CD4-positive, alpha-beta T cell (primary cell): ENCODE measurements at regions of chr7 and their contacts with region 1.

Region 1: GRCh38 chr7:92245487-92246362 is at the starts of genes ANKIB1 and KRIT1:
- DNase-seq: peak; percentile 76 to 93 (median 81)
- ATAC-seq: peak; percentile 78
- H3K4me3 ChIP-seq: peak within 1 kb of the TSS; percentile 87
- H3K4me3 Mint-ChIP-seq: peak within 1 kb of the TSS; percentile 97
- H3K27ac ChIP-seq: peak within 1 kb of the TSS; percentile 86 to 96
- H3K27ac Mint-ChIP-seq: peak within 1 kb of the TSS; percentile 99
- H3K4me1 ChIP-seq: peaks cover 17% of the 10 kb centered on the region
- H3K4me1 Mint-ChIP-seq: peaks cover 61% of the 10 kb centered on the region
- H3K27me3 ChIP-seq: no peaks in the 10 kb centered on the region
- H3K27me3 Mint-ChIP-seq: no peaks in the 10 kb centered on the region
- CTCF ChIP-seq: no peak
- total RNA-seq, gene ANKIB1: 60.0 to 66.9 TPM
- total RNA-seq, gene KRIT1: 28.6 to 28.7 TPM

Region 2: GRCh38 chr7:92178927-92179924 is 66.5 kb before region 1 on chr7 and contains the start of gene LRRD1:
- CTCF ChIA-PET with region 1: no interaction called
- POLR2A ChIA-PET with region 1: interaction called, 5 read pairs
- intact Hi-C with region 1: loop called in 1 of 2 experiments (anchors 5 kb)
- DNase-seq: peak; percentile 78 to 93 (median 88)
- ATAC-seq: peak; percentile 99
- H3K4me3 ChIP-seq: peak within 1 kb of the TSS; percentile 58
- H3K4me3 Mint-ChIP-seq: peak within 1 kb of the TSS; percentile 84
- H3K27ac ChIP-seq: no peak within 1 kb of the TSS
- H3K27ac Mint-ChIP-seq: no peak within 1 kb of the TSS
- H3K4me1 ChIP-seq: peaks cover 11% of the 10 kb centered on the region
- H3K4me1 Mint-ChIP-seq: peaks cover 14% of the 10 kb centered on the region
- H3K27me3 ChIP-seq: peaks cover 0 to 2% of the 10 kb centered on the region in 2 experiments
- H3K27me3 Mint-ChIP-seq: peaks cover 7% of the 10 kb centered on the region
- CTCF ChIP-seq: peak; percentile 98
- total RNA-seq, gene LRRD1: not detected

Region 3: GRCh38 chr7:92281031-92281430 is 35.3 kb after region 1 on chr7:
- CTCF ChIA-PET with region 1: no interaction called
- POLR2A ChIA-PET with region 1: no interaction called
- intact Hi-C with region 1: no loop called
- DNase-seq: no peak
- ATAC-seq: no peak
- H3K4me3 ChIP-seq: no peak overlapping the region
- H3K4me3 Mint-ChIP-seq: no peak overlapping the region
- H3K27ac ChIP-seq: no peak overlapping the region
- H3K27ac Mint-ChIP-seq: no peak overlapping the region
- H3K4me1 ChIP-seq: no peaks in the 10 kb centered on the region
- H3K4me1 Mint-ChIP-seq: peaks cover 25% of the 10 kb centered on the region
- H3K27me3 ChIP-seq: no peaks in the 10 kb centered on the region
- H3K27me3 Mint-ChIP-seq: no peaks in the 10 kb centered on the region
- CTCF ChIP-seq: no peak

Region 4: DNA sequence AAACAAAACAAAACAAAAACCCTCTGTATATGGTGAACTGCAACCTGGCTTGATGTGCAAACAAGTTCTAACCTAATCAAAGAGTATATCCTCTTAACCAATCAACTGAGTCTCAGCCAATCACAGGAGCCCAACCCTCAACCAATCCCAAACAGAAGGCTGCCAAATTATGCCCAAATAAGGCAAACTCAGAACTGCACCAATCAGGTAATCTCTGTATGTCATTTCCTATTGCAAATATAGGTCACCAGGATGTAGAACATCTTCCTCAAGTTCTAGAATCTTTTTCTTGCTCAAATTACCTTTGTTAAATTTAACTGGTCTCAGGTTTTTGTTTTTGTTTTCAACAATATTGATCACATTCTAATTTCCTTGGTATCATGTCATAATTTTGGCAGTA is 339.3 kb after region 1 on chr7:
- CTCF ChIA-PET with region 1: no interaction called
- POLR2A ChIA-PET with region 1: no interaction called
- intact Hi-C with region 1: loop called in 1 of 2 experiments (anchors 2 kb)
- DNase-seq: peak in 4 of 14 experiments; percentile 6 to 50 (median 46)
- ATAC-seq: peak; percentile 33
- H3K4me3 ChIP-seq: no peak overlapping the region
- H3K4me3 Mint-ChIP-seq: peak overlapping the region; percentile 48
- H3K27ac ChIP-seq: no peak overlapping the region
- H3K27ac Mint-ChIP-seq: peak overlapping the region; percentile 70
- H3K4me1 ChIP-seq: peaks cover 26% of the 10 kb centered on the region
- H3K4me1 Mint-ChIP-seq: peaks cover 71% of the 10 kb centered on the region
- H3K27me3 ChIP-seq: no peaks in the 10 kb centered on the region
- H3K27me3 Mint-ChIP-seq: no peaks in the 10 kb centered on the region
- CTCF ChIP-seq: no peak